ENCODE measurements at regions of chr17 and their contacts with region 1.

Region 1: DNA sequence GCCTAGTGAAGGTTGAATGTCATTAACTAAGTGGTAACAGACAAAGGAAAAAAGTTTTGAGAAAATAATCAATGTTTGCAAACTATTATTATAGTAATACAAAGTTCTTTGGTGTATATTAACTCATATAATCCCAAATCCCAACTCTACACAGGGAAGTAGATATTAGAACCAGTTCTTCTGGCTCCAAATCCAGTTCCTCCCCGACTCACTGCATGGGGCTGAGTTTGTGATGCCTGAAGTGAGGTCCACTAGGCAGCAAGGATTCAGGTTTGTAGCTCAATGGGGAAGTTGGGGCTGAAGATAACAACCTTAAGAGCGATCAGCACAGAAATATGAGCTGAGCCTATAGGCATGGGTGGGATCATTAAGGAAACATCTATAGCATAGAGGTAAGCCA is 5.6 kb upstream of the SYNRG start:
- DNase-seq: no peak
- ATAC-seq: no peak
- H3K4me3 ChIP-seq: no peak overlapping the region
- H3K27ac ChIP-seq: no peak overlapping the region
- H3K4me1 ChIP-seq: no peaks in the 10 kb centered on the region
- H3K27me3 ChIP-seq: no peaks in the 10 kb centered on the region
- CTCF ChIP-seq: no peak

Region 2: DNA sequence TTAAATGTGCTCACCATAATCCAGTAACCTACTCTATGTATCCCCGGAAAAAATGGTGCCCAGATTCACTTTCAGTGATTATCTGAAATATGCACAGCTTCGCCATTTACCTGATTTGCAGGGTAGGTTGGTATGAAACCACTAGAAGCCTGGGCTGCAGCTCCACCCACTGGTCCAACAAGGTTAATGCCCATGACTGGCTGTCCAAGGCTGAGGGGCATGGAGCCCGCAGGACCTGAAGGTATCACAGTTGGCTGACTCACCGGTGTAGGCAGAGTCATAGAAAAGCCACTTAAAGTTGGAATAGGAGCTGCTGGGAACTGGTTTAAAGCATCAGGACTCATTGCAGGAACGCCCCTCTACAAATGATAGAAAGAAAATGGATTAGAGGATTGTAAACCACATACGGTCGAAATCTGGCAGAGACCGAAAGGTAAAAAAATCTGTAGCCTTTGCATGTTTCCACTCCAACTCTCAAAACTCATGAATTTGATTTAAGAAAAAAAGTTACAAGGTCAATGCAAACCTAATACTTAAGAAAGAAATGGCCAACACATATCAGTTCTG is 44.2 kb before region 1 on chr17:
- intact Hi-C with region 1: loop called in 1 of 2 experiments (anchors 10 kb)
- DNase-seq: peak in 1 of 2 donors; percentile 37
- ATAC-seq: peak; percentile 39 to 85 (median 82)
- H3K4me3 ChIP-seq: no peak overlapping the region
- H3K27ac ChIP-seq: no peak overlapping the region
- H3K4me1 ChIP-seq: no peaks in the 10 kb centered on the region
- H3K27me3 ChIP-seq: no peaks in the 10 kb centered on the region
- CTCF ChIP-seq: peak; percentile 29

Measured in psoas muscle (tissue), 8 donors.